Right lobe of liver (tissue), 6 donors: ENCODE measurements at regions of chr2 and their contacts with region 1.

Region 1: GRCh38 chr2:76599732-76600368 is 889.1 kb upstream of the GCFC2 start:
- DNase-seq: peak; percentile 43 to 69 (median 62)
- ATAC-seq: peak; percentile 97 to 100 (median 100)
- H3K4me3 ChIP-seq: no peak overlapping the region
- H3K27ac ChIP-seq: no peak overlapping the region
- H3K4me1 ChIP-seq: no peaks in the 10 kb centered on the region
- H3K27me3 ChIP-seq: no peaks in the 10 kb centered on the region
- CTCF ChIP-seq: peak; percentile 69 to 83 (median 78)
- POLR2A ChIP-seq: no peak

Region 2: DNA sequence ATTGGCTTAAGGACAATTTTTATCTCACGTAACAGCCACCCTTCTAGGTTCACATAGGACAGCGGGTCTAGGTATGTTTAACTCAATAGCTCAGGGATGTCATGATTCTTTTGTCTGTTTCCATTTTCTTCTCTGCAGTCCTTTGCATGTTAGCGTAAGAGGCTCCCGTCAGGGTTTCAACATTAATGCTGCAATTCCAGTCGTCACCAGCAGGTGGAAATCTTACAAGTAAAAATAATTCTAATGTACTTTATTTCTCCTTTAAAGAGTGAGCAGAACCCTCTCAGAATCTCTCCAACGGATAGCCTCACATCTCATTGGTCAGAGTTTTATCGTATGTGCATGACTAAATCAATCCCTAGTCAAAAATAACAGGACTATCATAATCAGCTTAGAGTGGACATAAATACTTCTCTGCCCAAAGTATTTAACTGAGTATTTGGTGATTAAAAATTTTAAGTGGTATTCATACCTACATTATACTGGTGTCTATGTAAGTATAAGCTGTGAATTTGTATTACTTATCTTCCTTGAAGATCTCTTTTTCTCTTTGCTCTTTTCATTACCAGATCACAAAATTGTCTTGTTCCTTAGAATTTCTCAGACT is 401.9 kb before region 1 on chr2:
- intact Hi-C with region 1: loop called in 1 of 2 experiments (anchors 5 kb)
- DNase-seq: peak in 2 of 3 donors; percentile 21 to 66
- ATAC-seq: peak; percentile 60 to 77 (median 70)
- H3K4me3 ChIP-seq: no peak overlapping the region
- H3K27ac ChIP-seq: no peak overlapping the region
- H3K4me1 ChIP-seq: no peaks in the 10 kb centered on the region
- H3K27me3 ChIP-seq: no peaks in the 10 kb centered on the region
- CTCF ChIP-seq: peak; percentile 64 to 78 (median 74)
- POLR2A ChIP-seq: no peak

Region 3: GRCh38 chr2:76556018-76556417 is 43.8 kb before region 1 on chr2:
- intact Hi-C with region 1: no loop called
- DNase-seq: no peak
- ATAC-seq: peak in 2 of 4 donors; percentile 40 to 54
- H3K4me3 ChIP-seq: no peak overlapping the region
- H3K27ac ChIP-seq: no peak overlapping the region
- H3K4me1 ChIP-seq: no peaks in the 10 kb centered on the region
- H3K27me3 ChIP-seq: no peaks in the 10 kb centered on the region
- CTCF ChIP-seq: no peak
- POLR2A ChIP-seq: no peak

Region 4: GRCh38 chr2:76684756-76685155 is 84.9 kb after region 1 on chr2:
- intact Hi-C with region 1: no loop called
- DNase-seq: no peak
- ATAC-seq: no peak
- H3K4me3 ChIP-seq: no peak overlapping the region
- H3K27ac ChIP-seq: no peak overlapping the region
- H3K4me1 ChIP-seq: no peaks in the 10 kb centered on the region
- H3K27me3 ChIP-seq: no peaks in the 10 kb centered on the region
- CTCF ChIP-seq: no peak
- POLR2A ChIP-seq: no peak